Activated T-helper 1 cell treated with anti-CD3 and anti-CD28 coated beads, Interleukin-12 subunit alpha, Interleukin-12 subunit beta, Interleukin-2, Interleukin-4 antibody, amounts not matched to agents 30 ng/mL and 10 ng/mL and 1 ng/mL, durations not matched to agents 14 hours and 24 hours and 36 hours (primary cell): ENCODE measurements at regions of chr5 and their contacts with region 1.

Region 1: DNA sequence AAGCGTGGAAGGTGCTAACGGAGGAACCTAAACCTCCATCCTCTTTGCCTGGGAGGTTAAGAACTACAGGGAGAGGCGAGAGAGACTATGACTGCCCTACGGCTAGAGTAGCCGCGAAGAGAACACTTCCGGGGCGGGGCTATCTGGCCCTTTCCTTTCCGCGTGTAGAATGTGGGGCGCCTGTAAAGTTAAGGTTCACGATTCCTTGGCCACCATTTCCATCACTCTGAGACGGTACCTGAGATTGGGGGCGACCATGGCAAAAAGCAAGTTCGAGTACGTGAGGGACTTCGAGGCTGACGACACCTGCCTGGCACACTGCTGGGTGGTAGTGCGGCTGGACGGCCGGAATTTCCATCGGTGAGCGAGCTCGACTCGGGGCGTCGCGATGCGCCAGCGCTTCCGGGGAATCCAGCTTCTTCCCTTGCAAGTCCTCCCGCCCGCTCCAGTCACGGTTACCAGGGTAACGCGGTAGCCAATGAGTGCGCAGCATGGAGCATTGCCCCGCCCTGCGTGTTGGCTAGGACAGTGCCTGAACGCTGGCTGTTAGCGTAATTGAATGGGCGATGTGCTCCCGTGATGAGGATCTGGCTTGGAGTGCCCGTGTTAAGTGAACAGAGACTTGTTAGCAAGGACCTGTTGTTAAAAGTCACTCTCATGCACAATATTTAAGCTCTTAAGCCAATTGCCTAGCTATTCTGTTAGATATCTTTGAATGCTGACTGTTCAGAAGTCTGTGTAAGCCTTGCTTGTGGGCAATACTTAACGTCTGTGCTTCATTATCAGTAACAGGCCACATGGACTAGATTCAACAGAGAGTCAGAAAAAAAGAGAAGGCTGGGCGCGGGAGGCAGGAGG is at the start of gene THG1L:
- DNase-seq: peak; percentile 97
- H3K4me3 Mint-ChIP-seq: peak within 1 kb of the TSS; percentile 88
- H3K27ac Mint-ChIP-seq: peak within 1 kb of the TSS; percentile 97
- H3K4me1 Mint-ChIP-seq: peaks cover 37% of the 10 kb centered on the region
- H3K27me3 Mint-ChIP-seq: no peaks in the 10 kb centered on the region
- total RNA-seq, gene THG1L: 26.8 and 30.1 TPM in 2 replicates

Region 2: GRCh38 chr5:157142317-157143126 is 589.0 kb before region 1 on chr5 and contains the start of gene MED7:
- intact Hi-C with region 1: loop called (anchors 2 kb)
- DNase-seq: peak; percentile 95
- H3K4me3 Mint-ChIP-seq: peak within 1 kb of the TSS; percentile 95
- H3K27ac Mint-ChIP-seq: peak within 1 kb of the TSS; percentile 99
- H3K4me1 Mint-ChIP-seq: peaks cover 42% of the 10 kb centered on the region
- H3K27me3 Mint-ChIP-seq: no peaks in the 10 kb centered on the region
- total RNA-seq, gene MED7: 15.0 and 15.5 TPM in 2 replicates

Region 3: GRCh38 chr5:157464519-157465171 is 266.9 kb before region 1 on chr5:
- intact Hi-C with region 1: loop called (anchors 1 kb)
- DNase-seq: peak; percentile 42
- H3K4me3 Mint-ChIP-seq: peak overlapping the region; percentile 36
- H3K27ac Mint-ChIP-seq: peak overlapping the region; percentile 83
- H3K4me1 Mint-ChIP-seq: peaks cover 48% of the 10 kb centered on the region
- H3K27me3 Mint-ChIP-seq: peaks cover 17% of the 10 kb centered on the region

Region 4: GRCh38 chr5:157603333-157604190 is 127.9 kb before region 1 on chr5:
- intact Hi-C with region 1: loop called (anchors 1 kb)
- DNase-seq: peak; percentile 74
- H3K4me3 Mint-ChIP-seq: peak overlapping the region; percentile 59
- H3K27ac Mint-ChIP-seq: peak overlapping the region; percentile 88
- H3K4me1 Mint-ChIP-seq: peaks cover 79% of the 10 kb centered on the region
- H3K27me3 Mint-ChIP-seq: no peaks in the 10 kb centered on the region

Region 5: DNA sequence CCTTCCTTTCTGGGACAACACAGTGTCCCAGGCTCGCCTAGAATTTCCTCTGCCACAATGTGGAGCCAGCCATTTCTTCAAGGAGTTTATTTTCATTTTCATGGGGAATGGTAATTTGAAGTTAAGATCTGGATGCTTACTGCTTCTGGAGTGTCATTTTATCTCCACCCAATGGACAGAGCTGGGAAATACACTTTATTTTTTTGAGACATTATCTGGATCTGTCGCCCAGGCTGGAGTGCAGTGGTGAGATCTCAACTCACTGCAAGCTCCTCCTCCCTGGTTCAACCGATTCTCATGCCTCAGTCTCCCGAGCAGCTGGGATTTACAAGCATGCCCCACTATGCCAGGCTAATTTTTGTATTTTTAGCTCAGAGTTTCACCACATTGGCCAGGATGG is 13.0 kb before region 1 on chr5:
- intact Hi-C with region 1: loop called (anchors 1 kb)
- DNase-seq: no peak
- H3K4me3 Mint-ChIP-seq: peak overlapping the region; percentile 45
- H3K27ac Mint-ChIP-seq: peak overlapping the region; percentile 59
- H3K4me1 Mint-ChIP-seq: peaks cover 45% of the 10 kb centered on the region
- H3K27me3 Mint-ChIP-seq: no peaks in the 10 kb centered on the region

Region 6: GRCh38 chr5:159262859-159263567 is 1531.5 kb after region 1 on chr5 and contains the start of gene UBLCP1:
- intact Hi-C with region 1: loop called (anchors 5 kb)
- DNase-seq: peak; percentile 71
- H3K4me3 Mint-ChIP-seq: peak within 1 kb of the TSS; percentile 96
- H3K27ac Mint-ChIP-seq: peak within 1 kb of the TSS; percentile 98
- H3K4me1 Mint-ChIP-seq: peaks cover 21% of the 10 kb centered on the region
- H3K27me3 Mint-ChIP-seq: peaks cover 2% of the 10 kb centered on the region
- total RNA-seq, gene UBLCP1: 30.8 and 32.3 TPM in 2 replicates